PC-9 (cell line): ENCODE measurements at regions of chr20 and their contacts with region 1.

Region 1: GRCh38 chr20:3781153-3781910 is at the start of gene SPEF1:
- DNase-seq: peak; percentile 85 to 94
- H3K4me3 ChIP-seq: peak within 1 kb of the TSS; percentile 65
- H3K27ac ChIP-seq: no peak within 1 kb of the TSS
- H3K4me1 ChIP-seq: peaks cover 34% of the 10 kb centered on the region
- H3K27me3 ChIP-seq: no peaks in the 10 kb centered on the region
- CTCF ChIP-seq: peak; percentile 75
- total RNA-seq, gene SPEF1: 2.6 and 2.7 TPM in 2 replicates

Region 2: DNA sequence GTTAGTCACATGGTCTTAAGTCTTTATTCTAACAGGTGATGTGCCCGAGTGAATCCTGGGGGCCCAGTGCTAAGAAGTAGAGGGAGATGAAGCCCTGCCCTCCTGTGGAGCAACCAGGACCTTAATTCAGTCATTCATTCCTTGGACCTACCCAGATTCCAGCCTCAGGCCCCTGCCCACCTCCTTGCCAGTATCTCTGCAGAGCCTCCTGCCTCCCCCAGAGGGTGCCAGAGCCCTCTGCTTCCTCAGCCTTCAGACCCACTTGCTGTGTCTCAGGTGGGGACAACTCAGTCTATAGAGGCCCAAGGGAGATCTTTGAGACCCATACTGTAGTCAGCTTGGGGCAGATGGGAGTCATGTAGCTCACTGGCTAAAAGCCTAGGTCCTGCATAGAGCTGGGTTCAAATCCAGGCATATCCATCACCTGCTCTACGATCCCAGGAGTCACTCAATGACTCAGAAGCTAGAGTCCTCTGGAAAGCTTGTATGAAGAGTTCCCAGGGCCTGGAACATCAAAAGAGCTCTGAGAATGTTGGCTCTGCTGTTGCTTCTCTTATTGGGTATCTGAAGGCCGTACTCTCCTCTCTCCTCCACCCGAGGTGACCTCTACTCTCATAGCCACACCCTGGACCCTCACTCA is 65.0 kb before region 1 on chr20:
- CTCF ChIA-PET with region 1: no interaction called
- POLR2A ChIA-PET with region 1: no interaction called
- intact Hi-C with region 1: loop called (anchors 1 kb)
- DNase-seq: peak in 1 of 2 experiments; percentile 51
- H3K4me3 ChIP-seq: no peak overlapping the region
- H3K27ac ChIP-seq: no peak overlapping the region
- H3K4me1 ChIP-seq: no peaks in the 10 kb centered on the region
- H3K27me3 ChIP-seq: peaks cover 6% of the 10 kb centered on the region; the same call in 1 of the 2 replicates
- CTCF ChIP-seq: peak; percentile 76

Region 3: DNA sequence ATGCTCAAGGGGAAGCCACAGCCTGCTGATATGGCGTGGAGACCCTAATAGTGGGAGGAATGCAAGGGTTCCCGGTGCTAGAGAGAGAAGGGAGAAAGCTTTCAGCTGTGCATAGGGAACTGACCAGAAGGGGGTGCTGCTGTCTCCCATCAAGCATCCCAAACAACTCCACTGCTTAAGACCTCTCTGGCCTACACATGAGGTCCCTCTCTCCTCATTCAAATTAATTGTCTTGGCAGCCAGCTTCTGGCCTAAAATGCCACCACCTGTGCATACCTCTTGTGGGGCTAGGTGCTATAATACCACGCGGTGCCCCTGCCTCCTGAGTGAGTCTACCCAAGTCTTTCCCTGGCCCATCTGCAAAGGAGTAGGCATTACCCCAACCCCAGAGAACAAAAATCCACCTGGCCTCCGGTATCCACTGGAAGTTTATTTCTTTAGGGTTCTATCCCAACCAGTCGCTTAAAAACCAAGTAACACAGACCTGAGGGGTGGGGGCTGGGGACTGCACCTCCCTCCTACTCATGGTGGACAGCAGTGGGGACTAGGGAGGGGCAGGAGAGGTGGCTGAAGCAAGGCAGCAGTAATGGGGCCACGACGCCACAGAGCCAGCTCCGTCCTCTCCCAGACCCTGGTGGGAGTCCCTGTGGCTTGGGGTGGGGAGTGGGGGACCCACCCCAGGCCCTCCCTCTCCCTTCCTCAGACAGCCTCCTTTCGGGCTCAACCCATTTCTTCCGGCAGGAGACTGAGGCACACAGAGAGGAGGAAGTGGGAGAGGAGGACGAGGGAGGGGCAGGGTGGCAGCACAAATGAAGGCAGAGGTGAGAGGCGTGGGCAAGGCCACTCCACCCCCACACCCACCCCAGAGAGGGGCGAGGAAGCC is 28.0 kb before region 1 on chr20:
- CTCF ChIA-PET with region 1: interaction called, 8 read pairs
- POLR2A ChIA-PET with region 1: no interaction called
- intact Hi-C with region 1: loop called (anchors 1 kb)
- DNase-seq: peak; percentile 37 to 39
- H3K4me3 ChIP-seq: no peak overlapping the region
- H3K27ac ChIP-seq: no peak overlapping the region
- H3K4me1 ChIP-seq: no peaks in the 10 kb centered on the region
- H3K27me3 ChIP-seq: no peaks in the 10 kb centered on the region
- CTCF ChIP-seq: peak; percentile 71

Region 4: GRCh38 chr20:3767427-3768341 is 13.6 kb before region 1 on chr20 and contains the start of gene ADISSP:
- CTCF ChIA-PET with region 1: interaction called, 7 read pairs
- POLR2A ChIA-PET with region 1: interaction called, 3 read pairs
- intact Hi-C with region 1: loop called (anchors 1 kb)
- DNase-seq: peak; percentile 90 to 99
- H3K4me3 ChIP-seq: peak within 1 kb of the TSS; percentile 95
- H3K27ac ChIP-seq: peak within 1 kb of the TSS; percentile 60
- H3K4me1 ChIP-seq: peaks cover 25% of the 10 kb centered on the region
- H3K27me3 ChIP-seq: no peaks in the 10 kb centered on the region
- CTCF ChIP-seq: no peak
- total RNA-seq, gene ADISSP: 86.9 and 95.0 TPM in 2 replicates

Region 5: GRCh38 chr20:3805182-3805581 is 23.9 kb after region 1 on chr20:
- CTCF ChIA-PET with region 1: no interaction called
- POLR2A ChIA-PET with region 1: no interaction called
- intact Hi-C with region 1: no loop called
- DNase-seq: no peak
- H3K4me3 ChIP-seq: no peak overlapping the region
- H3K27ac ChIP-seq: peak overlapping the region; percentile 88
- H3K4me1 ChIP-seq: peaks cover 42% of the 10 kb centered on the region
- H3K27me3 ChIP-seq: no peaks in the 10 kb centered on the region
- CTCF ChIP-seq: no peak

Region 6: GRCh38 chr20:3839169-3839727 is 57.9 kb after region 1 on chr20:
- CTCF ChIA-PET with region 1: no interaction called
- POLR2A ChIA-PET with region 1: no interaction called
- intact Hi-C with region 1: no loop called
- DNase-seq: no peak
- H3K4me3 ChIP-seq: no peak overlapping the region
- H3K27ac ChIP-seq: no peak overlapping the region
- H3K4me1 ChIP-seq: peaks cover 35% of the 10 kb centered on the region
- H3K27me3 ChIP-seq: no peaks in the 10 kb centered on the region
- CTCF ChIP-seq: no peak